Lower leg skin (tissue), 4 donors: ENCODE measurements at regions of chr1 and their contacts with region 1.

Region 1: GRCh38 chr1:231949277-231950091 is 322.9 kb downstream of the DISC1 start:
- DNase-seq: peak in 1 of 2 donors; percentile 23
- H3K4me3 ChIP-seq: no peak overlapping the region
- CTCF ChIP-seq: no peak
- POLR2A ChIP-seq: no peak

Region 2: GRCh38 chr1:230849451-230850224 is 1099.8 kb before region 1 on chr1:
- intact Hi-C with region 1: no loop called
- DNase-seq: peak; percentile 58 to 87
- H3K4me3 ChIP-seq: no peak overlapping the region
- CTCF ChIP-seq: no peak
- POLR2A ChIP-seq: no peak

Region 3: GRCh38 chr1:231818337-231818736 is 131.1 kb before region 1 on chr1:
- intact Hi-C with region 1: no loop called
- DNase-seq: peak; percentile 61 to 88
- H3K4me3 ChIP-seq: no peak overlapping the region
- CTCF ChIP-seq: no peak
- POLR2A ChIP-seq: no peak

Region 4: GRCh38 chr1:231828182-231828920 is 121.1 kb before region 1 on chr1:
- intact Hi-C with region 1: no loop called
- DNase-seq: no peak
- H3K4me3 ChIP-seq: no peak overlapping the region
- CTCF ChIP-seq: no peak
- POLR2A ChIP-seq: no peak

Region 5: DNA sequence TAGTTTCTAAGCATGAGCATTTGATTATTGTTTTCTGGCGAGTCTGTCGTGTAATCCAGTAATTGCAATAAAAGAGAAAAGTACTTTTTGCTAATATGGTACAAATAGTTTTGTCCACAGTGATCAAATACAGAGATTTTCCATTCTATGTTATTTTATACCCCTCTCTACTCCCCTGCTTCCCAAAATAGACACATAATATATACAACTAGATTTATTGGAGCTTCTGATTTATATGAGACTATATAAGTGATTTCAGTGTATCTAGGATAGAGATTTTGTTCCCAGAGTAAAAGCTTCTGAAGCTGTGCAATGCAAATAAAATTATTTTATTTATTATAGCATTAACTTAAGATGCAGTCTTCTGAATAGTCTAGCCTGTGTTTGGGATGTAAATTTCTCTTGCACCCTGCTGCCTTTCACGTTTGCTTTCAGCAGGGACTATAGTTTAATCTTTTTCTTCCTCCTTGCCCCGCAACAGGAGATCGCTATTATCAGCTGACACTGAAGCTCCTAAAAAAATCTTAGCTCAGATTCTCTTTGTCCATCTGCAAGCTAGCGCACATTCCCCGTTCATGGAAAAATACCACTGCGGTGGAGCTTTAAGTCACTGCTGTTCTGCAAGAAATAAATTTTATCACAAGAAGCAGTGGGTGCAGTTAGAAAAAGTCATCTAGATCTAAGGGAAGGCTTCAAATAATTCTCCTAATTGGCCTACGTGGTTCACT is 49.6 kb before region 1 on chr1:
- intact Hi-C with region 1: no loop called
- DNase-seq: no peak
- H3K4me3 ChIP-seq: no peak overlapping the region
- CTCF ChIP-seq: no peak
- POLR2A ChIP-seq: no peak

Region 6: DNA sequence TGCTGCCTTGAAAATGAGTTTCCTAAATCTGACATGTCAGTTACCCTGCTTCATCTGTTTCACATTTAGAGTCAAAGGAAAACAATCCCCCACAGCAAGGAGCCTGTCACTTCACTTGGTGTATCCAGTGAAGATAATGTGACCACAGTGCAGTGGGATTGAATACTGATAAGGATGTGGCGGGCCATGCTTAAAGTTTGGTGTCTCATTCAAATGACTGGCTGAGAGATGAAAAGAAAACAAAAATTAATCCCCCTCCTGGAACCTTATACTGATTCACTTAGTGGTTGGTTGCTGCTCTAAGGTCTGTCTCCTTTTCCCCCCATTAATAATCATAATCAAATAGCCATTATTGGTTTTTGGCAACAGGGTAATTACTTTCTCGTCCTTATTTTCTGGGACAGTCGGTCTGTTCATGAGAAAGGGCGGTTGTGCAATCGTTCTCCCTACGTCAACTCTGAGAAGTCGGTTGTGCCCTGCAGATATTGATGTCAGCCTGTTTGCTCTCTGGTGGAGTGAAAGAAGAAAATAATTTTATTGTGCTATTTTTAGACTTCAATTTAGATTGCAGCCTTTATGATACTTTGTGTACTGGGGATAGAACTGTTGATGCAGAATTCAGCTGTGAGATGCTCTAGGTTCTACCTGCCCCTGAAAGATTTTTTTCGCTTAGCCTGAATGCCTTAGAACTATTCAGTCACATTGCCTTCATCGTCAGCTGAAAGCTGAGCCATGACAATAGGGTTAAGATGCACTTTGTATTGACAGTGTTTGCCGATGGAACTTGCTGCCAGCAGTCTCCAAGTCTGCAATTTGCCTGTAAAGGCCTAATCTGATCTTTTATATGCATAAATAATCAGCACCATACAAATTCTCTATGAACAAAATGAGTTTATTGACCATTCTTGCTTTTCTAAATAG is 37.4 kb after region 1 on chr1:
- intact Hi-C with region 1: loop called (anchors 5 kb)
- DNase-seq: peak in 1 of 2 donors; percentile 43
- H3K4me3 ChIP-seq: no peak overlapping the region
- CTCF ChIP-seq: no peak
- POLR2A ChIP-seq: no peak